SK-MEL-5 (cell line): ENCODE measurements at regions of chr1 and their contacts with region 1.

Region 1: DNA sequence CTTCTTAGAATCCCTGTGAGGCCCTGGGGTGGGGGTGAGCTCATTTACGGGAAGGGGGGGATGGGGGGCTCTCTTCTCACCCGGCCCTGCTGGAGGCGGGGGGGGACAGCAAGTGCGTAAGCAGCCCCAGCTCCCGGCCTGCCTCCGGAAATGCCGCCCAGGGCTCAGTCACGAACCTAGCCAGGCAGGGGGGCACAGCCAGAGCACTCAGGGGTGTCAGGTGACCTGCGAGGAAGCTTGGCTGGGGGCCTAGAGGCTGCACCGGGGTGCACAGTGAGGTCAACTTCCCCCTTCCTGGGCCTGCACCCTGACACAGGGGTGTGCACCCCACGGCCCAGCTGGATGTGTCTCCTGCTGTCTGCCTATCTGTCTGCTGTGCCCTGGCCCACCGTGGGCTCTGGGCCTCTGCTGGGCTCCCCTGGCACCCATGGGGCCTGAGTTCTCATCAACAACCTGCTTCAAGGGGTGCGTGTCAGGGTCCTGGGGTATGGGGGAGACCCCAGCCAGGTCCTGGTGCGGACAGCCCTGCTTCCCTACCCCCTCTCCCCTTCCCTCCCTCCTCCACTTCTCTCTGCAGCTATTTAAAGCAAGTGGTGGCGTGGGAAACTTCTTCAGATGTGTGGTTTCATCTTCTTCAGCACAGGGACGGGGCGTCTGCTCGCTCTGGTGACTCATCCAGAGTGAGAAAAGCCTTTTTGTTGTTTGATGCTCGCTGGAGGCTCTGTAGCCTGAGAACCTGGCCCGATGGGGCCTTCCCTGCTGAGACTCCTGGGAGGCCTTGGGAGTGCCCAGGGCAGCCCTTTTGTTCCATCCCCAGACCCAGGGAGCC is 92.5 kb upstream of the RUNX3 start:
- DNase-seq: peak; percentile 99

Region 2: GRCh38 chr1:24909388-24909898 is 113.1 kb before region 1 on chr1:
- in situ Hi-C with region 1: loop called (anchors 25 kb)
- DNase-seq: peak; percentile 79

Region 3: GRCh38 chr1:25216123-25216522 is 193.5 kb after region 1 on chr1:
- in situ Hi-C with region 1: no loop called
- DNase-seq: no peak